Aorta (tissue), 5 donors: ENCODE measurements at regions of chr9 and their contacts with region 1.

Region 1: DNA sequence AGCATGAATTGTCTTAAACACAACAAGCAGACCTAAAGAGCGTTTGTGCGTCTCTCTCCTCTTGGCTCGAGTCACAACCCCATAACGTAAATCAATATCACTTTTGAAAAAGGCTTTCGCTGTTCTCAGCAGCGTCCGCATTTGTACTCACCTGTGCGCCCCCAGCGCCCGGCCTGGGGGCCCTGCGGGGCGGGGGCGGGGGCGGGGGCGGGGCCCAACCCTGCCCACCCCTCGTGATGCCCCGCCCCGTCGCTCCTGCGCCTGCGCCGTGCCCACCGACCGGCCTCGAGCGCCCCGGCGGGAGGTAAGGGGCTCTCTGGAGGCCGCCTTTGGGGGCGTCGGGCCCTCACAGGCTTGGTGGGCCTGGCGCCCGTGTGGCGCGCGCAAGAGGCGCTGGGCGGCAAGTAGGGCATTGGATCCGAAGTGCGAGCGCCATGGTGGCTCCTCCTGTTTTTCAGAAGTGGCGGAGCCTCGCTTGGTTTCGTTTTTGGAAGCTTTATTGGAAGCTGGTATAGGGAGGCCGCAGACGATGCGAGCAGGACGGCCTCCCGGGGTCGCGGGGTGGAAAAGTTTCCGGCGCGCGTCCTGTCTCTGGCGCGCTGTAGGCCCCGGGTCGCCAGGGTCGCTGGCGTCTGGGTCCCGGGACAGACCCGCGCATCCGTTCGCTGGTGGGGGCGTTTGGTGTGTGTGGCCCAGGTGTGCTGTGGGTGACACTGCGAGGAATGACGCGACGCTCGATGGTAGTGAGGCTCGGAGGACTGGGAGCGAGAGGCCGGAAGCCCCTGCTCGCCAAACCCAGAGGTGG is at the start of gene STX17:
- DNase-seq: peak; percentile 81 to 93
- ATAC-seq: peak; percentile 97
- H3K4me3 ChIP-seq: peak within 1 kb of the TSS; percentile 78 to 88
- H3K27ac ChIP-seq: peak within 1 kb of the TSS; percentile 49 to 95
- H3K4me1 ChIP-seq: no peaks in the 10 kb centered on the region
- H3K27me3 ChIP-seq: no peaks in the 10 kb centered on the region
- total RNA-seq, gene STX17: 34.1 to 47.5 TPM

Region 2: GRCh38 chr9:98974994-98975712 is 931.5 kb before region 1 on chr9:
- intact Hi-C with region 1: loop called in 1 of 2 experiments (anchors 10 kb)
- DNase-seq: peak; percentile 86 to 96
- ATAC-seq: peak; percentile 91
- H3K4me3 ChIP-seq: no peak overlapping the region
- H3K27ac ChIP-seq: peak overlapping the region in 1 of 2 donors; percentile 4
- H3K4me1 ChIP-seq: no peaks in the 10 kb centered on the region
- H3K27me3 ChIP-seq: no peaks in the 10 kb centered on the region

Region 3: GRCh38 chr9:99221621-99222415 is 684.8 kb before region 1 on chr9 and contains the starts of genes ALG2 and SEC61B:
- intact Hi-C with region 1: loop called in 1 of 2 experiments (anchors 5 kb)
- DNase-seq: peak; percentile 96 to 98
- ATAC-seq: peak; percentile 99
- H3K4me3 ChIP-seq: peak within 1 kb of the TSS; percentile 68 to 90
- H3K27ac ChIP-seq: peak within 1 kb of the TSS; percentile 31 to 79
- H3K4me1 ChIP-seq: peaks cover 0 to 3% of the 10 kb centered on the region in 2 donors
- H3K27me3 ChIP-seq: no peaks in the 10 kb centered on the region
- total RNA-seq, gene ALG2: 22.2 to 24.1 TPM
- total RNA-seq, gene SEC61B: 95.0 to 111 TPM

Region 4: DNA sequence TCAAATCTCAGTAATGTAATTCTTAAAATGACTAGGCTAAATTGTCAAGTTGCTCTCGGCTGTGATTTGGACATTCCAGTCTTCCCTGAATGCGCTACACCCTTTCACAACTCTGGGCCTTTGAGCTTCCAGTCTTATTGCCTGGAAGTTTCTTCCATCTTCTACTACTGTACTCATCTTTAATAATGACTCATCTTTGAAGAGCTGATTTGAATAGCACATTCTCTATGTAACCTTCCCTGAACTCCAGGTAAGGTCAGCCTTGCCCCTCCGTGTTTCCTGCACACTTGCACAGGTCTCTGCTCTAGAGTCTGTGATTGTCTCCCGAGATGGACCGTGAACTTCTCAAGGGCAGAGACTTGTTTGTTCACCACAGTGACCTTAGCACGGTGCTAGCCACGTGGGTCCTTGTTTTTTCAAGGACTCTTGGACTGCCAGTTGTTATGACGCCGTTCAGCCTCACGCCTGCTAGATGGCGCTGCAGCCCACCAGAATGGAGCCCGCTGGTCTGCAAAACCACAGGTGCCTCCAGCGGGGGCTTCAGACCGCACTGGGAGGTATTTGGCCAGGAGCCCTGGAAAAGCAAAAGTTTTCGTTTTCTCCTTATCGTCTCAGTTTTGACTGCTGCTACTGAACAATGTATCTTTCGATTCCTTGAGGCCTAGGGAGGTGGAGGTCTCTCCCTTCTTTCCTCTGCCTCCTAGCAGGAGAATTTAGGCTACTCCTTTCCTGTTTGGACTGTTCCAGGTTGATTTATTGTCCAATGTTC is 640.2 kb before region 1 on chr9:
- intact Hi-C with region 1: loop called in 1 of 2 experiments (anchors 10 kb)
- DNase-seq: peak; percentile 74 to 90
- ATAC-seq: peak; percentile 79
- H3K4me3 ChIP-seq: no peak overlapping the region
- H3K27ac ChIP-seq: no peak overlapping the region
- H3K4me1 ChIP-seq: no peaks in the 10 kb centered on the region
- H3K27me3 ChIP-seq: no peaks in the 10 kb centered on the region